CD14-positive monocyte (primary cell): ENCODE measurements at regions of chr4 and their contacts with region 1.

Region 1: DNA sequence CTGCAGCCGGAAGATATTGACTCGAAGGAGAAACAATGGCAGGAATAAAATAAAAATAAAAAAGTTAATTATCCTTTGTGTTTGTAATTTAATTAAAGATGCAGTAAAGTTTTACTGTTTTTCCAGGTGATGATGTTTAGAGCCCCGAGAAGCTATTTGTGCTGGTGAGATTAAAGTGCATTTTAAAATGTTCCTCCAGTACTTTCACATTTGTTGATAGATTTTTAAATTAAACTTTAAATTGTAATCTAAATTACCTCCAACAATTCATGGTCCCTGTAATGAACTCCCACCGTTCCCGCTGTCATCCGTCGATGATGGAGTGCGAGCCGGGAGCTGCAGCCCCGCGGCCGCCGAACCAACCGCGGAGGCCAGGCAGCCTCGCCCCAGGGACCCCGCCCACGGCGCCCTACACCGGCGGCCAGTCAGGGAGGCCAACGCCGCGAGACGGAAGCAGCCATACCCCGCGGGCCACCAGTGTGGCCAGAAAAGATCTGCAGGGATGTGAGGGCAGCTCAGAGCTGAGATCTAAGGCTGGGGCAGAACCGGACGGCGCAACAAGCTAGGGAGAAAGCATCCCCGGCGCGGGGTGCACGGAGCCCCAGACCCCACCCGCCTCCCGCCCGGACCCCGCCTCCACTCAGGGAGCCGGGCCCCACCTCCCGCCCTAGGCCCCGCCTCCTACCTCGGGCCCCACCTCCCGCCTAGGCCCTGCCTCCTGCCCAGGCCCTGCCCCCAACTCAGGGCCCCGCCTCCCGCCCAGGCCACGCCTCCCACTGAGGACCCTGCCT is 104.0 kb downstream of the FAM53A start:
- DNase-seq: peak in 2 of 3 donors; percentile 86 to 98
- H3K4me3 ChIP-seq: peak overlapping the region; percentile 45 to 93 (median 74)
- H3K4me3 Mint-ChIP-seq: peak overlapping the region; percentile 79 to 87
- H3K27ac ChIP-seq: peak overlapping the region; percentile 79 to 86
- H3K27ac Mint-ChIP-seq: peak overlapping the region; percentile 85 to 93 (median 90)
- H3K4me1 ChIP-seq: peaks cover 13 to 15% of the 10 kb centered on the region in 2 donors
- H3K4me1 Mint-ChIP-seq: peaks cover 8% of the 10 kb centered on the region
- H3K27me3 ChIP-seq: no peaks in the 10 kb centered on the region
- H3K27me3 Mint-ChIP-seq: peaks cover 0 to 9% (median 1%) of the 10 kb centered on the region in 3 donors
- CTCF ChIP-seq: no peak

Region 2: DNA sequence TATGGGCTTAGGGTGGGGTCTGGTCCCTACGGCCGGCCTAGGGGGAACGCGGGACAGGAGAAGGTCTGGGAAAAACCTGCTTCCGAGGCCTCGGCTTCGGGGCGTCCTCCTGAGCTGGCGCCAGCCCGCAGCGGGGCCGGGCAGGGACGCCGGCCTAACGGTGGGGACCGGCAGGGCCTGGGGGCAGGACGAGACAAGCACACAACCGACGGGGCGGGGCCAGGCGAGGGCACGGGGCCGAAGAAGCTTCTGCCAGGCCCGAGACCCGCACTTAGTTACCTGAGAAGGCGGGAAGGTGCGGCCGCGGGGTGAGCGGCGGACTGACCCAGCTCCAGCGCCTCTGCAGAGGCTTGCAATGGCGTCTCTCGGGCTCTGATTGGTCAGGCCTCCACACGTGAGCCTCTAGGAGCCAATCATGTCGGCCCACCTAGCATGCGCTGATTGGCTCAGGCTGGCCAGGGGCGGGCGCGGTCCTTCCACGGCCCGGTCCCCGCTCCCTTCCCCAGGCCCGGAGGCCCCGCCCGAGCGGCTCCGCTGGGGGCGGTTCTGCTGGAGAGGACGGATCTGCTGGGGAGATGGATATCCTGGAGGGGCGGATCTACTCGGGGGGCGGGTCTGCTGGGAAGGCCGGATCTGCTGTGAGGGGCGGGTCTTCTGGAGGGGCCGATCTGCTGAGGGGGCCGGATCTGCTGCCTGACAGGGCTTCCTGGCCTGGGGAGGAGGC is 798.4 kb before region 1 on chr4:
- intact Hi-C with region 1: loop called in 1 of 2 experiments (anchors 5 kb)
- DNase-seq: peak; percentile 96 to 99 (median 98)
- H3K4me3 ChIP-seq: peak overlapping the region; percentile 76 to 88 (median 86)
- H3K4me3 Mint-ChIP-seq: peak overlapping the region; percentile 86 to 93
- H3K27ac ChIP-seq: peak overlapping the region; percentile 83 to 98
- H3K27ac Mint-ChIP-seq: peak overlapping the region; percentile 90 to 97 (median 96)
- H3K4me1 ChIP-seq: peaks cover 32 to 38% of the 10 kb centered on the region in 2 donors
- H3K4me1 Mint-ChIP-seq: peaks cover 45% of the 10 kb centered on the region
- H3K27me3 ChIP-seq: peaks cover 4 to 24% of the 10 kb centered on the region in 2 donors
- H3K27me3 Mint-ChIP-seq: peaks cover 20 to 28% (median 23%) of the 10 kb centered on the region in 3 donors
- CTCF ChIP-seq: no peak

Region 3: DNA sequence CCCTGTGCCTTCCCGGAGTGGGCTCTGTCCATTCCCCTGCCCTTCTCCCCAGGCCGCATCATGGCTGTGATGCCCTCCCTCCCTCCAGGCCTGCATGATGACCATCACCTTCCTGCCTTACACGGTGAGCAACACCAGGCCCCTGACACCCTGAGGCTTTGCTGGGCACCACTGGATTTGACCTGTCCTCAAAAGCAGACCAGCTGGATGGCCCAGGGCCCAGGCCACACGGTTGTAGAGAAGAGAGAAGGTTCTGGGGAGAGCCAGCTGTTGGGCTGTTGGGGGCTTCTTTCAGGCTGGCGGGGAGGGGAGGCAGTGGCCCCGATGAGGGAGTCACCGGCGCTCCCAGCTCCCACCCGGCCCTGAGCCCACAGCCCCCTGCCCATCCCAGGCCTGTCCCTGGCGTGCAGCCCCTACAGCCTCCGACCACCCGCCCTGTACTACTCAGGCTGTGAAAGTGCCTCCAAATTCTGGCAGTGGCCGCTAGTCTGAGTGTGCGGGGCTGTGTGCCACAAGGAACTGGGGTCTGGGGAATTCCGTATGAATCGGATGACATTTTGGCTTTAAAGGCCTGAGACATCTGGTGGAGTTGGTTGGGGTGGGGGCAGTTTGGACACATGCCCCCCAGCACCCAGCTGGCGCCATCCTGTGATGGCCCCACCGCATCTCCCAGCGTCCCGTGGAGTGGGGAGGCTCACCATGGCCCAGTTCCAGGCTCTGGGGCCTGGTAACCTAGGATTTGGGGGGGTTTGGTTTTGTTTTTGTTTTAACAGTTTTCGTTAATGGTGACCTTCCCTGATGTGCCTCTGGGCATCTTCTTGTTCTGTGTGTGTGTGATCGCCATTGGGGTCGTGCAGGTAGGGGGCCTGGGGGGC is 628.3 kb before region 1 on chr4:
- intact Hi-C with region 1: no loop called
- DNase-seq: no peak
- H3K4me3 ChIP-seq: no peak overlapping the region
- H3K4me3 Mint-ChIP-seq: no peak overlapping the region
- H3K27ac ChIP-seq: no peak overlapping the region
- H3K27ac Mint-ChIP-seq: peak overlapping the region in 1 of 7 donors; percentile 36
- H3K4me1 ChIP-seq: no peaks in the 10 kb centered on the region
- H3K4me1 Mint-ChIP-seq: no peaks in the 10 kb centered on the region
- H3K27me3 ChIP-seq: no peaks in the 10 kb centered on the region
- H3K27me3 Mint-ChIP-seq: peaks cover 0 to 7% (median 2%) of the 10 kb centered on the region in 3 donors
- CTCF ChIP-seq: no peak

Region 4: GRCh38 chr4:1533401-1534064 is 46.6 kb before region 1 on chr4:
- intact Hi-C with region 1: no loop called
- DNase-seq: no peak
- H3K4me3 ChIP-seq: no peak overlapping the region
- H3K4me3 Mint-ChIP-seq: no peak overlapping the region
- H3K27ac ChIP-seq: no peak overlapping the region
- H3K27ac Mint-ChIP-seq: no peak overlapping the region
- H3K4me1 ChIP-seq: no peaks in the 10 kb centered on the region
- H3K4me1 Mint-ChIP-seq: no peaks in the 10 kb centered on the region
- H3K27me3 ChIP-seq: no peaks in the 10 kb centered on the region
- H3K27me3 Mint-ChIP-seq: peaks cover 21 to 37% (median 21%) of the 10 kb centered on the region in 3 donors
- CTCF ChIP-seq: no peak

Region 5: GRCh38 chr4:1683736-1684505 is 103.8 kb after region 1 on chr4 and contains the start of gene FAM53A:
- intact Hi-C with region 1: loop called (anchors 5 kb)
- DNase-seq: peak; percentile 80 to 90 (median 87)
- H3K4me3 ChIP-seq: peak within 1 kb of the TSS; percentile 41 to 78 (median 73)
- H3K4me3 Mint-ChIP-seq: peak within 1 kb of the TSS; percentile 88 to 94
- H3K27ac ChIP-seq: peak within 1 kb of the TSS in 1 of 2 donors; percentile 58
- H3K27ac Mint-ChIP-seq: peak within 1 kb of the TSS; percentile 72 to 90 (median 80)
- H3K4me1 ChIP-seq: peaks cover 16 to 23% of the 10 kb centered on the region in 2 donors
- H3K4me1 Mint-ChIP-seq: peaks cover 15% of the 10 kb centered on the region
- H3K27me3 ChIP-seq: no peaks in the 10 kb centered on the region
- H3K27me3 Mint-ChIP-seq: peaks cover 0 to 5% (median 1%) of the 10 kb centered on the region in 3 donors
- CTCF ChIP-seq: no peak
- polyA plus RNA-seq, gene FAM53A: 0.40 to 0.82 (median 0.76) TPM

Region 6: DNA sequence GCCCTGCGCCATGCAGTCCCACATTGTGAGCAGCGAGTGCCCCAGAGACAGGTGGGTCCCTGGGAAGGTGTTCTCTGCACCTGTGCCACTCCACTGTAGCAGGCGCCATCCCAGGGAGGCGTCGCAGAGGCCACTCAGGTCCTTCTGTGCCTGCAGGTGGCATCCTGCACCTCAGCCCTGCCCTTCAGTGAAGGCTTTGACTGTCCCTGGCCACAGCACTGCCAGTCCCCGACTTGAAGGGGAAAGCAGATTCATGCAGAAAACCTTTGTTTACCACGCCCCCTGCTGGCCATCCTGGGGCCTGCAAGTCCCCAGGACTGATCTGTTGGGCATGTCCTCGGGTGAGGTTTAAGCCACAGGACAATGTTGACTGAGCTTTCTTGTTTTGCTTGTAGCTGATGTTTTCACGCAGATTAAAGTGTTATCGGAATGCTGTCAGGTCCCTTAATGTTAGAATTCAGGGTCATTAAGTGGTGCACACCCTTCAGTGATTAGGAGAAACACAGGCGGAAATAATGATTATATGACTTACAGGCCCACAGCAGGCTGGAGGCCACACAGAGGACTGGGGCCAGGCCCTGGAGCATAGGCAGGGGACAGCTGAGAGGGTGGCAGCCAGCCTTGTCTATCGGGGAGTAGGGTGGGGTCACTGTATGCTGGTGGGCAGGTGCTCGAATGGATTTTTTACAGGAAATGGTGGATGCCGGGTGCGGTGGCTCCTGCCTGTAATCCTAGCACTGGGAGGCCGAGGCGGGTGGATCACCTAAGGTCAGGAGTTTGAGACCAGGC is 146.2 kb after region 1 on chr4:
- intact Hi-C with region 1: loop called in 1 of 2 experiments (anchors 5 kb)
- DNase-seq: peak; percentile 83 to 85 (median 85)
- H3K4me3 ChIP-seq: peak overlapping the region in 1 of 3 experiments; percentile 80
- H3K4me3 Mint-ChIP-seq: peak overlapping the region; percentile 66 to 89
- H3K27ac ChIP-seq: peak overlapping the region; percentile 68 to 96
- H3K27ac Mint-ChIP-seq: peak overlapping the region; percentile 89 to 98 (median 94)
- H3K4me1 ChIP-seq: peaks cover 81 to 86% of the 10 kb centered on the region in 2 donors
- H3K4me1 Mint-ChIP-seq: peaks cover 81% of the 10 kb centered on the region
- H3K27me3 ChIP-seq: no peaks in the 10 kb centered on the region
- H3K27me3 Mint-ChIP-seq: peaks cover 0 to 3% (median 0%) of the 10 kb centered on the region in 3 donors
- CTCF ChIP-seq: peak; percentile 95

Region 7: GRCh38 chr4:3074078-3074795 is 1494.1 kb after region 1 on chr4 and contains the starts of genes HTT and HTT-AS:
- intact Hi-C with region 1: loop called in 1 of 2 experiments (anchors 10 kb)
- DNase-seq: peak; percentile 90 to 94 (median 92)
- H3K4me3 ChIP-seq: peak within 1 kb of the TSS; percentile 73 to 95 (median 89)
- H3K4me3 Mint-ChIP-seq: peak within 1 kb of the TSS; percentile 92
- H3K27ac ChIP-seq: peak within 1 kb of the TSS; percentile 92
- H3K27ac Mint-ChIP-seq: peak within 1 kb of the TSS; percentile 89 to 99 (median 96)
- H3K4me1 ChIP-seq: peaks cover 19 to 31% of the 10 kb centered on the region in 2 donors
- H3K4me1 Mint-ChIP-seq: peaks cover 22% of the 10 kb centered on the region
- H3K27me3 ChIP-seq: no peaks in the 10 kb centered on the region
- H3K27me3 Mint-ChIP-seq: peaks cover 0 to 3% (median 0%) of the 10 kb centered on the region in 3 donors
- CTCF ChIP-seq: no peak
- polyA plus RNA-seq, gene HTT: 1.8 to 27.1 (median 3.0) TPM
- polyA plus RNA-seq, gene HTT-AS: not detected